Panc1 (cell line): ENCODE measurements at regions of chr10 and their contacts with region 1.

Region 1: GRCh38 chr10:21516242-21517131 is 9.0 kb downstream of the SKIDA1 start:
- DNase-seq: no peak
- ATAC-seq: peak; percentile 47
- H3K4me3 ChIP-seq: peak overlapping the region; percentile 62
- H3K27ac ChIP-seq: peak overlapping the region; percentile 95
- H3K4me1 ChIP-seq: peaks cover 21% of the 10 kb centered on the region
- H3K27me3 ChIP-seq: no peaks in the 10 kb centered on the region
- CTCF ChIP-seq: no peak

Region 2: GRCh38 chr10:21427804-21428481 is 88.5 kb before region 1 on chr10:
- CTCF ChIA-PET with region 1: no interaction called
- POLR2A ChIA-PET with region 1: interaction called, 16 read pairs
- in situ Hi-C with region 1: no loop called
- intact Hi-C with region 1: no loop called
- DNase-seq: no peak
- ATAC-seq: no peak
- H3K4me3 ChIP-seq: no peak overlapping the region
- H3K27ac ChIP-seq: peak overlapping the region; percentile 29; the same call in 1 of the 2 replicates
- H3K4me1 ChIP-seq: no peaks in the 10 kb centered on the region
- H3K27me3 ChIP-seq: no peaks in the 10 kb centered on the region
- CTCF ChIP-seq: no peak

Region 3: GRCh38 chr10:21797984-21798765 is 281.7 kb after region 1 on chr10:
- CTCF ChIA-PET with region 1: no interaction called
- POLR2A ChIA-PET with region 1: interaction called, 11 read pairs
- in situ Hi-C with region 1: no loop called
- intact Hi-C with region 1: no loop called
- DNase-seq: no peak
- ATAC-seq: no peak
- H3K4me3 ChIP-seq: no peak overlapping the region
- H3K27ac ChIP-seq: no peak overlapping the region
- H3K4me1 ChIP-seq: no peaks in the 10 kb centered on the region
- H3K27me3 ChIP-seq: no peaks in the 10 kb centered on the region
- CTCF ChIP-seq: no peak